Psoas muscle (tissue), 8 donors: ENCODE measurements at regions of chr3 and their contacts with region 1.

Region 1: DNA sequence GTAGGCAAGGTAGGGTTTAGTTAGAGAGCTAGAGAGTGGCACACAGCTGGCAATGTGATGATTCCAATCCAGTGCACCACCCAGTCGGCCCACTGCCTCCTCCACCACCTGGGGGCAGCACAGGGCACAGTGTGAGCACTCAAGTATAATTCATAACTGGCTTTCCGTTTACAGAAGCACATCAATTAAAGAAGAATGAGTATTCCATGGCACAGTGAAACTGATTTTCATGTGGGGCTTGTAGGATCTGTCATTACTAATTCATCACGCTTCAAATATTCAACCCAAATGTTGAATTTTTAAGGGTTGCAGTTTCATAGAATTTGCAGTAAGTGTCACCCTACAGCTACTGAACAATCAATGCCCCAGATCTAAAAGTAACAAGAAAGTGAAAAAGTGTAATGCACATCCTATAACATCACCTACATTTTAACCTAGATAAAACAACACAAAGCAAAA is 149.9 kb downstream of the IGSF11 start:
- DNase-seq: peak; percentile 71 to 84
- ATAC-seq: peak; percentile 82 to 96 (median 92)
- H3K4me3 ChIP-seq: no peak overlapping the region
- H3K27ac ChIP-seq: no peak overlapping the region
- H3K4me1 ChIP-seq: no peaks in the 10 kb centered on the region
- H3K27me3 ChIP-seq: peaks cover 0 to 4% (median 2%) of the 10 kb centered on the region in 3 donors
- CTCF ChIP-seq: peak; percentile 89

Region 2: GRCh38 chr3:119034256-119035013 is 149.7 kb after region 1 on chr3 and contains the start of gene IGSF11:
- intact Hi-C with region 1: loop called (anchors 1 to 5 kb)
- DNase-seq: peak; percentile 72 to 87
- ATAC-seq: peak; percentile 94 to 96 (median 95)
- H3K4me3 ChIP-seq: peak within 1 kb of the TSS; percentile 92
- H3K27ac ChIP-seq: peak within 1 kb of the TSS; percentile 79
- H3K4me1 ChIP-seq: peaks cover 17% of the 10 kb centered on the region
- H3K27me3 ChIP-seq: peaks cover 0 to 2% (median 0%) of the 10 kb centered on the region in 3 donors
- CTCF ChIP-seq: peak; percentile 78
- total RNA-seq, gene IGSF11: 2.2 to 8.5 (median 4.3) TPM

Region 3: DNA sequence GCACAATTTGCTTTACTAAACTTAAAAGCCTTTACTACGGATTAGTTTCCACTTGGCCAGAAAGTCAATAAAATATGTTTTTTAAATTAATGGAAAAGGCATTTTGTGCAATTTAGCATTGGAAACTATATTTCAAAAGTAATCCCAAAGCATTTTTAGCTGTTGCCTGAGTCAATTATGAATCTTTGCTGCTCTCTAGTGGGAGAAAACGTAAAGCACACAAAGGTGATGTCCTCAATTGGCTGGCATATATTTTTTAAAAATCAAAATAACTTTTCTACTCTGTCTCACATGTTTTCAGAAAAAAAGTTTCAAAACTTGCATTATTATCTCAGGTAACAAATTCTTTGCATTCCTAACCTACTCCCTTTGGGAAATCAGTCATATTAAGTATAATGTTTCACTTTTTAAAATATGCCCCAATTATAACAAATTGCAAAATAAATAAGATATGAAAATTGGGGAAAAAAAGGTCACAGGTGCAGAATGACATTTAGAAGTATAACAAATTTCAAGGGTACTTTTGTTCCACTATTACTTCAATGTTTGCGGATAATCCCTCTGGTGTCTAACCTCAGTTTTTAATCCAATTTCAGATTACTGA is 213.9 kb after region 1 on chr3:
- intact Hi-C with region 1: loop called (anchors 1 kb)
- DNase-seq: no peak
- ATAC-seq: peak in 1 of 4 donors; percentile 69
- H3K4me3 ChIP-seq: no peak overlapping the region
- H3K27ac ChIP-seq: no peak overlapping the region
- H3K4me1 ChIP-seq: no peaks in the 10 kb centered on the region
- H3K27me3 ChIP-seq: no peaks in the 10 kb centered on the region
- CTCF ChIP-seq: peak; percentile 82

Region 4: DNA sequence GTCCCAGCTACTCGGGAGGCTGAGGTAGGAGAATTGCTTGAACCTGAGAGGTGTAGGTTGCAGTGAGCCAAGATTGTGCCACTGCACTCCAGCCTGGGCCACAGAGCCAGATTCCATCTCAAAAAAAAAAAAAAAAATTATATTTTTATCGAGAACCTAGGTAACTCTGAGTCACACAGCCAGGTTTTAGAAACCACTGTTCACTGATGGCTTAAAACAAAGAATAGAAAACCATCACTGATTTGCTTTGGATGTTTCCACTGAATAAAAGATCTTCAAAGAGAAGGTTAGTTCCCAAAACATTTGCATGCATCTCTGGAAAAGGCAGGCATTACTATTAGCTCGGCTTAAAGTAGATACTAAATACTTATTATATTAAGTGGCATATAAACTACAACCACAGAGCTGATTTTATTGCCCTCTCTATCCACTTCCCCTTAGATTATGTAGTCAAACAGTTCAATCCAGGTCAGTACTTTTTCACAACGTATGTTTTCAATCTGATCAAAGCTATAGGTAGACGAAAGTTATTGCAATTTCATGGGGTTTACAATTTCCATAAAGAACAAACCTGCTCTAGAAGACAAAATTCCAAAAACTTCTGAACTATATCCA is 354.5 kb after region 1 on chr3:
- intact Hi-C with region 1: loop called in 1 of 2 experiments (anchors 10 kb)
- DNase-seq: no peak
- ATAC-seq: no peak
- H3K4me3 ChIP-seq: peak overlapping the region; percentile 89
- H3K27ac ChIP-seq: peak overlapping the region; percentile 92
- H3K4me1 ChIP-seq: peaks cover 10% of the 10 kb centered on the region
- H3K27me3 ChIP-seq: no peaks in the 10 kb centered on the region
- CTCF ChIP-seq: no peak